ENCODE measurements at regions of chr11 and their contacts with region 1.

Region 1: DNA sequence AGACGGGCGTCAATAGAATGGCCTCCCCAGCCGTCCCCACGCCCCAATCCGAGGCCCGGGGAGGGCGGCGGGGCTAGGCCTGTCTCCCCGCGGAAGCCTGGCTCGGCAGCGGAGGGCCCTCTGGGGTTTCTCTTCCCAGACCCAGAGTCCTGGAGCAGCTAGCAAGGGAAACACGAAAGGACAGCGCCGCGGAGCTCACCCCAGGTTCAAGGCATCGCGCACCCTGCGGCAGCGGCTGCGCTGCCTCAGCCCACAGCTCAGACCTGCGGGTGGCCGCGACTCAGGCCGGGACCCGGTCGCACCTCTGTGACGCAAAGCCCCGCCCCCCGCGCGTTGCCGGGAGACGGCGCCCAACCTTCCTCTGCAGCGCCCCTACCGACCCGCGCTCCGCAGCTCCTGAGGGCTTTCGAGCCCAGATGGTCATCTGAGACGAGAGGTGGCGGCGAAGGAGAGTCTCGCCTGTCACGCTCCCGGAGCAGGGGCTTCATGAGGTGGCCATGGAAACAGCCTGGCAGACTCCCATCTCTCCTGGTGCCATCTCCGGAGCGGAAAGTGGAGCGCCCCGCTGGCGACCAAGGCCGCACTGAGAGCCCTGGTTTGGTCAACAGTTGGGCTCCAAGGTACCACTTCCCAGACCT is at the start of gene RNF141:
- DNase-seq: peak; percentile 85 to 97 (median 94)
- ATAC-seq: peak; percentile 97
- H3K4me3 ChIP-seq: peak within 1 kb of the TSS; percentile 70
- H3K4me3 Mint-ChIP-seq: peak within 1 kb of the TSS; percentile 93
- H3K27ac ChIP-seq: peak within 1 kb of the TSS; percentile 25 to 72
- H3K27ac Mint-ChIP-seq: peak within 1 kb of the TSS; percentile 77
- H3K4me1 ChIP-seq: peaks cover 13% of the 10 kb centered on the region
- H3K4me1 Mint-ChIP-seq: peaks cover 44% of the 10 kb centered on the region
- H3K27me3 ChIP-seq: no peaks in the 10 kb centered on the region
- H3K27me3 Mint-ChIP-seq: no peaks in the 10 kb centered on the region
- CTCF ChIP-seq: peak; percentile 87
- total RNA-seq, gene RNF141: 18.0 to 19.0 TPM

Region 2: DNA sequence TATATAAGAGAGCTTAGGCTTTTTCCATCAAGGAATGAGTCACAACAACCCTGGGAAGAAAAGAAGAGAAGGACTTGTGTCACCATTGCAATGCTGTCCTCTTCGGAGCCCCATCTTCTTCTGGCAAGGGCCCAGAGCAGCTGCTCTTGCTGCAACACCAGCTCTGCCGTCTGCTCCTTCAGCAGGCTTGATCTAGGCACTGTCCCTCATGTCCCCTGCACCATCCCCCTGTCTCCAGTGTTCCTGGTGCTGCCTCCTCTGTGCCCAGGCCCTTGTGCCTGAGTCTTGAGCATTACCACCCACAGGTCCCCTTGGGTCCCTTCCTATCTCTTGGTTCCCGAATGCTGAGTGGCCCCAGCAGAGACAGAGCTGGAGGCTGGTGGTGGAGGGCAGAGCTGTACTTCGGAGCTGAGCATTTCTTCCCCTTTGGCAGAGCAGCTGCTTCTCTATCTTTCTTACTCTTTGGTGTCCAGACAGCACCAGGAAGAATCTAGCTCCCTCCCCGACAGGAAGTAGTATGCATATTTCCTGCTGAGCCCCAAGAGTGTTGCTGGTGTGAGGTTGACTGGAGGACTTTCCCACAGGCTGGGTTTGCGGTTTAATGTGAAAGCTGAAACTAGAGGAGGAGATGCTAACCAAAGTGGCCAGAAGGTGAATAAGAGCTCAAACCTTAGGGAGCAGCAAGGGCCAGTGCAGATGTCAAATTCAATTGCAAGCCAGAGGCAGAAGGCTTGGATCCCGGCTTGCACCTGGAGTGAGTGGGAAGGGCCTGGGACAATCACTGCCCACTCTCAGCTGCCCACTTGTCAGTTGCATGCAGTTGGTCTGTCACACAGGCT is 939.8 kb before region 1 on chr11:
- CTCF ChIA-PET with region 1: no interaction called
- POLR2A ChIA-PET with region 1: no interaction called
- intact Hi-C with region 1: no loop called
- DNase-seq: peak; percentile 7 to 87 (median 32)
- ATAC-seq: peak; percentile 85
- H3K4me3 ChIP-seq: peak overlapping the region; percentile 36
- H3K4me3 Mint-ChIP-seq: peak overlapping the region; percentile 51
- H3K27ac ChIP-seq: peak overlapping the region; percentile 24 to 51
- H3K27ac Mint-ChIP-seq: peak overlapping the region; percentile 87
- H3K4me1 ChIP-seq: peaks cover 21% of the 10 kb centered on the region
- H3K4me1 Mint-ChIP-seq: peaks cover 16% of the 10 kb centered on the region
- H3K27me3 ChIP-seq: no peaks in the 10 kb centered on the region
- H3K27me3 Mint-ChIP-seq: no peaks in the 10 kb centered on the region
- CTCF ChIP-seq: no peak

Region 3: DNA sequence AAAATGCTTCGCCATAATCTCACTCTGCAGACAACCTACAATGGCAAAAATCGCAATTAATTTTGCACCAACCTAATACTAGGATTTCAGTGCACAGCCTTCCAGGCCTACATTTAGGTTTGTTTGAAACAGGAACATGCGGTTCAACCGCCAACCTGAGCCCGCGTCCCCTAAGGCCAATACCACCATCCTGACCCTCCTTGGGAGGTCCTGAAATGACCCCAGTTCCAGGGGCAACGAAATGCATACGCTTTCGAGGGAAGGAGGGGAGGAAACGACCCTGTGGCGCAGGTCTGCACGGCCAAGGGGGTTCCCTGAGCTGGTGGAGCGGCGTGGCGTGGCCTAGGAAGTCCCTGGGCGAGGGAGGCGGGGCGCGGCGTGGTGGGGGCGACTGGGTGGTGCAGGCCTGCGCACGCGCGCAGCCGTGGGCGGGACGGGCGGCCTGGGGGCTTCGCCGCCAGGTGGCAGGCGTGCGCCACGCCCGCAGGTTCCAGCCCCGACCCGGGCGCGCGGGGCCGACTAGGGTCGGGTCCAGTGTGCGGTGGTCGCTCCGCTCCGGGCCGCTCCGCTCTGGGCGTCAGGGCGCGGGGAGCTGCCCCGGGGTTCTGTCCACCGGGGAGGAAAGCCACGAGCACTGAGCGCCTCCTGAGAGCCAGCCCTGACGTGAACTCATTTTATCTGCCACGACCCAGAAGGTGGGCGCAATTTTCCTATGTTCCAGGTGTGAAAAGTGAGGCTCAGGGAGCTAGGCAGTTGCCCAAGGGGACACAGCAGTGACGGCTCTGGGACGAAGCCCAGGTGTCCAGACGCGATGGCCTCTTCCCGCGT is 783.0 kb before region 1 on chr11:
- CTCF ChIA-PET with region 1: no interaction called
- POLR2A ChIA-PET with region 1: no interaction called
- intact Hi-C with region 1: loop called in 1 of 2 experiments (anchors 10 kb)
- DNase-seq: peak; percentile 83 to 97 (median 89)
- ATAC-seq: peak; percentile 81
- H3K4me3 ChIP-seq: peak overlapping the region; percentile 75
- H3K4me3 Mint-ChIP-seq: peak overlapping the region; percentile 88
- H3K27ac ChIP-seq: no peak overlapping the region
- H3K27ac Mint-ChIP-seq: peak overlapping the region; percentile 79
- H3K4me1 ChIP-seq: peaks cover 21% of the 10 kb centered on the region
- H3K4me1 Mint-ChIP-seq: peaks cover 17% of the 10 kb centered on the region
- H3K27me3 ChIP-seq: no peaks in the 10 kb centered on the region
- H3K27me3 Mint-ChIP-seq: no peaks in the 10 kb centered on the region
- CTCF ChIP-seq: peak; percentile 62

Region 4: DNA sequence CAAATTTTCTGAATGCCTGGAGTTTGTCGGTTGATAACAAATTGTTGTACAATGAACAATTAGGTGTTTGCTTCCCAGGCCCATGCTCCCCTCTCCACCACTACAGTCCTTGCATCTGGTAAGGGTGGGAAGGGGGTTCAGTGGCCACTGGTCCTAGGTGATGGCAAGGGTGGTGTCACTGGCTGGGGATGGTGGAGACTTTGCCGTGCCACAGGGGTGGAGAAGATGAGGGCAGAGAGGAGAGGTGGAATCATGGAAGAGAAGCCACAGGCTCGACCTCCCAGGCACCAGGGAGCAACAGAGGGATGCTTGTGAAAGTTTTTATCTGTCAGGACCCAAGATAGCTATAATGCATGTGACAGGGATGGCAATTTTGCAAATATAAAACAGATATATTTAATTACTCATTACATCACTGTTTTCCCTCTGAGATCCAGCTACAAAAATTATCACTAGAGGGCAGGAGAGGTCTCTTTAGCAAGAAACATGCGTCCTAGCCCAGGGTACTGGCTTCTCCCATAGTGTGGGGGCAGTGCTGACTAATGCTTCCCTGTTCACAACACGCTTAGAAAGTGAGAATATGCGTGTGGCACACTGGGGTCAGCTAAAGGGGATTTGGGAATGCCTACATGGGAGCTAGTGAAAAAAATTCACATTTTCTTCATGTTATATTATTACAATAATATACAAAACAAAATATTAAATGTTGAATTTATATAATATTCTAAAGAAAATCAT is 135.0 kb before region 1 on chr11:
- CTCF ChIA-PET with region 1: interaction called, 17 read pairs
- POLR2A ChIA-PET with region 1: interaction called, 6 read pairs
- intact Hi-C with region 1: loop called in 1 of 2 experiments (anchors 5 kb)
- DNase-seq: peak in 13 of 14 experiments; percentile 10 to 80 (median 24)
- ATAC-seq: peak; percentile 88
- H3K4me3 ChIP-seq: no peak overlapping the region
- H3K4me3 Mint-ChIP-seq: no peak overlapping the region
- H3K27ac ChIP-seq: no peak overlapping the region
- H3K27ac Mint-ChIP-seq: no peak overlapping the region
- H3K4me1 ChIP-seq: peaks cover 18% of the 10 kb centered on the region
- H3K4me1 Mint-ChIP-seq: peaks cover 34% of the 10 kb centered on the region
- H3K27me3 ChIP-seq: no peaks in the 10 kb centered on the region
- H3K27me3 Mint-ChIP-seq: no peaks in the 10 kb centered on the region
- CTCF ChIP-seq: peak; percentile 72

Region 5: DNA sequence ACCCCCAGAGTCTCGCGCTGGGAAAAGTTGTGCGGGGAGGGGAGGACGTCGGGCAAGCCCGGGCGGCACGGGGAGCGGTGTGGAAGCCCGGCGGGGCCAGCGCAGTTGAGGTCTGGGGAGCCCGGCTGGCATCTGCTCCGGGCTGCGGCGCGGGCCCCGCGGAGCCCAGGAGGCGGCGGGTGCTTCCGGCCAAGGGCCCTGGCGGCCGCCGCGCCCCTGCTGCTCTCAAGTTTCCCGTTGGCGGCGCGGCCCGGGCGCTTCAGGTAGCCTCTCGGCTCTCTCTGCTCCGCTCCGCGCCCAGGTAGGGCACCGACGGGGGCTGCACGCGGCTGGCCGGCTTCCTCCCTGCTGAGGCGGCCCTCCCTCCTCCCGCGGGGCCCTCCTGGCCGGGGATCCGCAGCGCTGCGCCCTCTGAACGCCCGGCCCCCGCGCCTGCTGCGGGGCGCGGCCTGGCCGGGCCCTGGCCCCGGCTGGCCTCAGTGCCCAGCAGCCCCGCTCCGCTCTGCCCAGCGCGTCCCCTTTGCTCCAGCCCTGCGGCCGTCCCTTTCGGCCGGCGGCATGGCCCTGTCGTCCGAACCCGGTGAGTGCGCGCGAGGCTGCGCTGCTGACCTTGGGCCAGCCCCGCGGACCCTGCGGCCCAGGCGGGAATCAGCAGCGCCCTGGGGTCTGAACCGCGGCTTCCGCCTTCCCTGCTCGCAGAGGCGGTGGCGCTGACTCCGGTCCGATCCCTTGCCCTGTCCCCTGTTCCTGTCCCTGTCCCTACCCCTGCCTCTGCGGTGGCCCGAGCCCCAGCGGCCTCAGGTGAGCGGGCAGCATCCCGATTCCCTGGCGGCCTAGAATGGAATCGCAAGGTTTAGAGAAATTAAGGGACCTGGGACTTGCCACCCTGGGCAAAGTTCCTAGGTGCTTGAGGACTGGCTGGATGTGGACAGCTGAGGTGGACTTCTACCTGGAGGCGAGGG is 90.3 kb before region 1 on chr11:
- CTCF ChIA-PET with region 1: interaction called, 22 read pairs
- POLR2A ChIA-PET with region 1: interaction called, 18 read pairs
- intact Hi-C with region 1: loop called (anchors 2 to 5 kb)
- DNase-seq: peak in 13 of 14 experiments; percentile 36 to 79 (median 53)
- ATAC-seq: peak; percentile 69
- H3K4me3 ChIP-seq: peak overlapping the region; percentile 60
- H3K4me3 Mint-ChIP-seq: peak overlapping the region; percentile 94
- H3K27ac ChIP-seq: peak overlapping the region; percentile 60 to 64
- H3K27ac Mint-ChIP-seq: peak overlapping the region; percentile 95
- H3K4me1 ChIP-seq: peaks cover 41% of the 10 kb centered on the region
- H3K4me1 Mint-ChIP-seq: peaks cover 53% of the 10 kb centered on the region
- H3K27me3 ChIP-seq: no peaks in the 10 kb centered on the region
- H3K27me3 Mint-ChIP-seq: no peaks in the 10 kb centered on the region
- CTCF ChIP-seq: peak; percentile 62

Region 6: GRCh38 chr11:10514210-10514609 is 26.8 kb before region 1 on chr11:
- CTCF ChIA-PET with region 1: interaction called, 23 read pairs
- POLR2A ChIA-PET with region 1: interaction called, 3 read pairs
- intact Hi-C with region 1: no loop called
- DNase-seq: no peak
- ATAC-seq: no peak
- H3K4me3 ChIP-seq: no peak overlapping the region
- H3K4me3 Mint-ChIP-seq: no peak overlapping the region
- H3K27ac ChIP-seq: no peak overlapping the region
- H3K27ac Mint-ChIP-seq: no peak overlapping the region
- H3K4me1 ChIP-seq: no peaks in the 10 kb centered on the region
- H3K4me1 Mint-ChIP-seq: no peaks in the 10 kb centered on the region
- H3K27me3 ChIP-seq: no peaks in the 10 kb centered on the region
- H3K27me3 Mint-ChIP-seq: no peaks in the 10 kb centered on the region
- CTCF ChIP-seq: no peak

Region 7: DNA sequence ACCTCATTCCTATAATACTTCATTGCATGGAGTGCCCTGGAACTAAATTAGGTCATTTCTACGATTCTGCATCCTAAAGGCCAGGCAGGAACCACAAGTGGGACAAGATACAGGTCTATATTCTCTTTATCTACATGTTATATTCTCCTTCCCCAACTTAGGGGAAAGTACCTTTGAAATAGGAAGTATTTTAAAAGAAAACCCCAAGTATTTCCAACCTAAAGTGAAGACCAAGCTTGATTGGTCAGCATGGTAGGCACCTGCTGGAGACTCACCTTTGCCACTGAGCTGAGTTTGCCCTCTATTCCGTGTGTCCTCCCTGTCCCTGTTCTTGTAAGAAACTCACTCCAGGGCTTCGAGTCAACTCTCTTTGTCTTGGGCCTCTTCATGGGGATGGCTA is 38.7 kb after region 1 on chr11:
- CTCF ChIA-PET with region 1: no interaction called
- POLR2A ChIA-PET with region 1: no interaction called
- intact Hi-C with region 1: no loop called
- DNase-seq: no peak
- ATAC-seq: no peak
- H3K4me3 ChIP-seq: no peak overlapping the region
- H3K4me3 Mint-ChIP-seq: no peak overlapping the region
- H3K27ac ChIP-seq: no peak overlapping the region
- H3K27ac Mint-ChIP-seq: no peak overlapping the region
- H3K4me1 ChIP-seq: peaks cover 5% of the 10 kb centered on the region
- H3K4me1 Mint-ChIP-seq: no peaks in the 10 kb centered on the region
- H3K27me3 ChIP-seq: peaks cover 0 to 2% of the 10 kb centered on the region in 2 experiments
- H3K27me3 Mint-ChIP-seq: peaks cover 5% of the 10 kb centered on the region
- CTCF ChIP-seq: no peak

Region 8: GRCh38 chr11:10730151-10730550 is 189.1 kb after region 1 on chr11:
- CTCF ChIA-PET with region 1: no interaction called
- POLR2A ChIA-PET with region 1: no interaction called
- intact Hi-C with region 1: loop called in 1 of 2 experiments (anchors 5 kb)
- DNase-seq: peak in 2 of 14 experiments; percentile 27 to 37
- ATAC-seq: no peak
- H3K4me3 ChIP-seq: no peak overlapping the region
- H3K4me3 Mint-ChIP-seq: no peak overlapping the region
- H3K27ac ChIP-seq: no peak overlapping the region
- H3K27ac Mint-ChIP-seq: no peak overlapping the region
- H3K4me1 ChIP-seq: peaks cover 12% of the 10 kb centered on the region
- H3K4me1 Mint-ChIP-seq: peaks cover 12% of the 10 kb centered on the region
- H3K27me3 ChIP-seq: no peaks in the 10 kb centered on the region
- H3K27me3 Mint-ChIP-seq: peaks cover 12% of the 10 kb centered on the region
- CTCF ChIP-seq: no peak

Region 9: DNA sequence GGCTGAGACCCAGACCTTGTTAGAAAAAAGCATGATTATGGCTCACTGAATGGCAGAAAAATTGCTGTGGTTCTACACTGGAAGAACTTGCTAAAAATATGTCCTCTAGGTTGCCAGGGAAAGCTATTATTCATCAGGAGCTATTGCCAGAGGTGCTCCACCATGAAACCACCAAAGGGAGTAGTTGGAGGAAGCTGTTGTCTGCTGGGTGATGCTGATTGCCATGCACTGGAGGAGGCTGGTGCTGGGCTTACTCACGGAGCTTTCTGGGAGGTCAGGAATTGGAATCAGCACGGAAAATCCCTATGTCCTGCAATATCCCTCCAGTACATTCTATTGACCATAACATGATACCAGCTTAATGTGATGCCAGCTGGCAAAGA is 516.4 kb after region 1 on chr11:
- CTCF ChIA-PET with region 1: no interaction called
- POLR2A ChIA-PET with region 1: no interaction called
- intact Hi-C with region 1: no loop called
- DNase-seq: no peak
- ATAC-seq: no peak
- H3K4me3 ChIP-seq: no peak overlapping the region
- H3K4me3 Mint-ChIP-seq: no peak overlapping the region
- H3K27ac ChIP-seq: no peak overlapping the region
- H3K27ac Mint-ChIP-seq: no peak overlapping the region
- H3K4me1 ChIP-seq: no peaks in the 10 kb centered on the region
- H3K4me1 Mint-ChIP-seq: no peaks in the 10 kb centered on the region
- H3K27me3 ChIP-seq: no peaks in the 10 kb centered on the region
- H3K27me3 Mint-ChIP-seq: no peaks in the 10 kb centered on the region
- CTCF ChIP-seq: no peak

Measured in CD4-positive, alpha-beta T cell (primary cell).